Left cardiac atrium (tissue), 4 donors: ENCODE measurements at regions of chr3 and their contacts with region 1.

Region 1: DNA sequence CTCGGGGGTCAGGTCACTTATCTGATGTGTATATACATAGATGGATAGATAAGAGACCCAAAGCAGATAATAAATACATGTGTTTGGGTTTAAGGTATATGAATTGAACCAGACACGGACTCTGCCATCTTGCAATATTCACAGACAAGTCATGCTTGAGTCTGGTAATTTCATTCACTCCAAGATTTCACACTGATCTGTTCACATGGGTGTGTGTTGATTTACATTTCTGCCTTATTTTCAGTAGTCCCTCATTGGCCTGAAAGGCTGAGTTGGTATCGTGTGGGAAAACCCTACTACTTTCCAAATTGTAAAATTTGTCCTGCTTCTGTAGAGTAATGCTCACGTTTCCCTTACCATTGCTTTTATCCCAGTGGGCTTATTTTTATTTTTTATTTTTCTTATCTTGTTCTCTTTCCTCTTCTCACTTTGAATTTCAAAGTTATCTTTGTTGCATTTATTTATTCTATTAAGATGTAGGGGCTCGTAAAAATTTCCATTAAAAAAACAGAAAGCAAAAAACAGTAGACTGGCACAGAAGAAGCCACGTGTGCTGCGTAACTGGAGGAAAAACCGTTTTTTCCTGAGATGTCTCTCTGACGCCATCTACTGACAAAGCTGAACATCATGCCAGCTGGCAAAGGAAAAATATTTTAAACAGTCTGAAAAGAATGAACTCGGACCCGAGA is 10.8 kb upstream of the MFSD1 start:
- DNase-seq: no peak
- ATAC-seq: peak; percentile 52 to 63

Region 2: DNA sequence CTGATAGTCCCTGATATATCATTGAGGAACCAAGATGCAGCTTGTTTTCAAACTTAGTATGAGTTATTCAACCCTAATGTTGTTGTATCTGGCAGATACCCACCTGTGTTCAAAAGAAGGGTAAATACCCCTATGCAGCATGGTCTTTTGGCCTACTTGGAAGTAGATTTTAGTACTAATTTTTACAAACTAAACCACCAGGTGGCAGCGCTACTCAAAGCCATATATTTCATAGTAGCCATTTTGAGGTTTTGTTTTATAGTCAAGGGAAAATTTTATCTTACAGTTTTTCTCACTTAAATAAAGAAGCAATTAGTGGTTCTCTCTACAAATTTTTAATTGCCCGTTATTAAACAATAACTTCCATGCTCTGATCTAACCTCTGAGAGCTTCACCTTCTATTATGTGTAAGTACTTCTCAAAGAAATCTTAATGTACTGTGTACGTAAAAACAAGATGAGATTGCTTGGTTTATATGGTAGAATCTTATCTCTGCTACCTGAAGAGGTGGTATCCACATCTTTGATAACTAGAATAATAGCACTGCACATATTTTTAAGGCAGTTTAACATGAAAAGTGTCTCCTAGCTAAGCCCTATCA is 251.5 kb before region 1 on chr3:
- intact Hi-C with region 1: loop called in 1 of 2 experiments (anchors 10 kb)
- DNase-seq: no peak
- ATAC-seq: peak in 1 of 2 donors; percentile 36

Region 3: GRCh38 chr3:158552124-158552523 is 238.9 kb before region 1 on chr3:
- intact Hi-C with region 1: no loop called
- DNase-seq: no peak
- ATAC-seq: no peak

Region 4: DNA sequence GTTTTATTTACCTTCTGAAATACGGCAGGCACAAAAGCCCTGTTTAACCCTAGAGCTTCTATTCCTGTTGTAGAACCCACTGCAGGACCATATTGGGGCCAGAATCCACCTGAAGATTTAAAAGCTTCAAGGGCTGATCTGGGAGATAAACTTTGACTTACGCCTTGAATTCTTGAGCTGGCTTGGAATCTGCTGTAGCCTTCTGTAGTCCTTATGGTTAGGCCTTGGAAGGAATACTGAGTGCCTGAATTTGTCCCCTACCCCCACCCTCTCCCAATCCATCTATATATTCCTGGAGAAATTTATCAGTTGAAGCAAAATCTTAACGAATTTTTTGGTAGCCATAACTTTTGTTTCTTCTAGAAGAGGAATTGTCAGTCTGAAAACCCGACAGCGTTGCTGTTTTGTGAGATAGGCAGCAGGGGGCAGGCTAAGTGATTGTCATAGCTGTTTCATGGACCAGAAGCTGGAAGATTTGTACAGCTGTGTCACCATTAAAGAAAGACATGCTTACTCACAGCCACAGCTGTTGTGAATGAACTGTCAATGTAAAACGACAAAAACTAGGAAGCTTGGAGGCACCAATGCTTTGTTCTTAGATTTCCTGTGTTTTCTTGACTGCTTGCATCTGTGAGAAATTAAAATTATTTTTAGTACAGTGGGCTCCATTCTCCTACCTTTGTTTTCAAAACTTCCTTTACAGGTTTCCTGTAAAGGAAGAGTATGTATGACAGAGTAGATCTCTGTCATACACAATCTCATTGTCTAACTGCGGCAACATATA is 131.4 kb before region 1 on chr3:
- intact Hi-C with region 1: loop called in 1 of 2 experiments (anchors 10 kb)
- DNase-seq: no peak
- ATAC-seq: peak; percentile 78 to 82

Region 5: DNA sequence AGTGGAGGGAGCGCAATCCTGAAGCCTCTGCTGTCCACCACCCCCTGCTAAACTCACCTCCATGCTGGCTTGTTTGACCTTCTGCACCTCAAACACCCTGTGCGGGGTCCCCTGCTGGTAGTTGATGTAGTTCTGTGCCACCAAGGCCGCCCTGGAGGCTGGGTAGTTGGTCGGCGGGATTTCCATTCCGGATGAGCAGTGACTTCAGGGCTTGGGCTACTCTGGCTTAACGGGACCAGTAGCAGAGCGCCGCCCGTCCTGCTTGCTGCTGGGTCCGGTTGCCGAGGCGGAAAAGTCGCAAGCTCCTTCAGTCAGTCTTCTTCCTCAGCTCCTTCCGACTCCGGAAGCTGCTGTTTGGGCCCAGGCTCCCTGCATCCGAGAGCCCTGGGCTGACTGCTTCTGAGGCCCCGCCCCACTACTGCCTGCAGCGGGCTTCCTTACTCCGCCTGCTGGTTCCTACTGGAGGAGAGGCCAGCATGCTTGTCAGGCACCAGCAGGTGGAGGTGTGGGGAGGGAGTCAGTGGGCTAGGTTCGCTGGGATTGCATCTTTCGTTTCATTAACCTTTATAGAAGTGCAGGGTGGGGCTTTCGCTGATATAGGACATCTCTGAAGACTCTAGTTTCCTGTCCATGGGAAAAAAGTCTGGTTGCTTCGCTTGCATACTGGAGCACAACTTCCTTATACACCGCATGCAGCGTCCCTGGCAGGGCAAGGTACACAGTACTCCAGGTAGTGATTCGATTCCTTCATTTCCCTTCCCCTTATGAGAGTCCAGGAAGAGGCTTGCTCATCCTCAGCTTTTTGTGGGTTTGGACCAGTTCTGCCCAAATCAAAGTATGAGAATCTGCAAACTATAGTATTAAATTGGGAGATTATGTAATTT is 118.5 kb before region 1 on chr3 and contains the start of gene LXN:
- intact Hi-C with region 1: loop called in 1 of 2 experiments (anchors 5 kb)
- DNase-seq: peak; percentile 88
- ATAC-seq: peak; percentile 98 to 100
- total RNA-seq, gene LXN: 5.7 to 15.3 TPM

Region 6: GRCh38 chr3:158727206-158728060 is 63.6 kb before region 1 on chr3:
- intact Hi-C with region 1: loop called (anchors 1 to 2 kb)
- DNase-seq: no peak
- ATAC-seq: peak in 1 of 2 donors; percentile 2